ENCODE measurements at regions of chr9 and their contacts with region 1.

Region 1: GRCh38 chr9:21395778-21396717 is 10.8 kb upstream of the IFNA2 start:
- DNase-seq: peak; percentile 26 to 79 (median 65)
- ATAC-seq: peak; percentile 74
- H3K4me3 ChIP-seq: peak overlapping the region; percentile 40 to 52
- H3K4me3 Mint-ChIP-seq: peak overlapping the region; percentile 65
- H3K27ac ChIP-seq: no peak overlapping the region
- H3K27ac Mint-ChIP-seq: no peak overlapping the region
- H3K4me1 ChIP-seq: peaks cover 4% of the 10 kb centered on the region
- H3K4me1 Mint-ChIP-seq: peaks cover 5% of the 10 kb centered on the region
- H3K27me3 ChIP-seq: peaks cover 5 to 7% of the 10 kb centered on the region in 2 experiments
- H3K27me3 Mint-ChIP-seq: peaks cover 55% of the 10 kb centered on the region
- CTCF ChIP-seq: peak; percentile 81

Region 2: DNA sequence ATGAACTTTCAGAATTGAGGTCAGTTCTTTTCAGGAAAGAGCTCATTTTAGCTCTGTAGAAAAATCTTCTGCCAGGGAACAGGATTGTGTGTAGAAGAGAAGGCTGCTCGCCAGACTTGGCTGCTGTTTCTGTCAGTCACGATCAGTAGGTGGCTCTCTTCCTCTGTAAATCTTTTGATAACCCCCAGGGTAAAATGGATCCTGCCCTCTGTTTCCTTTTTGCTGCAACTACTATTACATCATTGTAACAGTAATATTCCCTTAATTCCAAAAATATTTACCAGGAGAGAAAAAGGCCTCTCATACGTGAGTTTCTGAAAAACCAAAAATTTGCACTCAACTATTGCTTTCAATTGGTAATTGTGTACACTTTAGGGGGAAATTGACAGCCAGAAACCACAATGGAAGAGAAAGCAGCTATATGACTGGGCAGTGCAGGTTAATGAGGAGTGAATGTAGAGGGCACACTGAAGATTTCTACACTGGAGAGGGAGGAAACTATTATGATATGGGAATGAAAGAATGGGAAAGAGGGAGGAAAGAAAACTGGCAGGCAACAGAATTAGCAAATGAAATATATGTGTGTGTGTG is 241.9 kb before region 1 on chr9:
- CTCF ChIA-PET with region 1: interaction called, 7 read pairs
- POLR2A ChIA-PET with region 1: no interaction called
- intact Hi-C with region 1: loop called in 1 of 2 experiments (anchors 1 kb)
- DNase-seq: peak in 2 of 9 experiments; percentile 44 to 56
- ATAC-seq: peak; percentile 52
- H3K4me3 ChIP-seq: no peak overlapping the region
- H3K4me3 Mint-ChIP-seq: no peak overlapping the region
- H3K27ac ChIP-seq: no peak overlapping the region
- H3K27ac Mint-ChIP-seq: no peak overlapping the region
- H3K4me1 ChIP-seq: peaks cover 4% of the 10 kb centered on the region
- H3K4me1 Mint-ChIP-seq: peaks cover 9% of the 10 kb centered on the region
- H3K27me3 ChIP-seq: no peaks in the 10 kb centered on the region
- H3K27me3 Mint-ChIP-seq: peaks cover 2% of the 10 kb centered on the region
- CTCF ChIP-seq: no peak

Region 3: DNA sequence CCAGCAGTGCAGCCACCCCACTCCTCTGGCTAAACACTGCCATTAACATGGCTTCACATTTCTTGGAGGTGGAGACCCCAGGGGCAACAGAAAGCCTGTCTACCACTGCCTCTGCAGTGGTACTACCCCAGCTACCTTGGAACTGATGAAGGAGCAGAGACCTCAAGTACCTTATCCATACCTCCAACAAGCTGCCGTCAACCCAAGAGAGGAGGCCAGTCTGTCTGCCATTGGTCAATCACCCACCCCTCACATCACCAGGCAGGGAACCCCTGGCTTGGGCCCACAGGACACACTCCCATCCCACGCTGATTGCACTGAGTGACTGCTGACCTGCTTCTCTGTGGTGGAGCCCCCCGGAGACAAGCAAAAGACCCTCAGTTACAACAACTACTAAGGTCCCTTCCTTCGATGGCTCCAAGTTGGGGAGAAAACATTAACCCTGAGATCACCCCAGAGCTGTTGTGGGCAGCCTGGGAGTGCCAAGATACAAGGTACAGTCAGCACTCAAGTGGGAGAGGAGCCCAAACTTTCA is 161.8 kb before region 1 on chr9:
- CTCF ChIA-PET with region 1: interaction called, 30 read pairs
- POLR2A ChIA-PET with region 1: no interaction called
- intact Hi-C with region 1: loop called (anchors 1 to 10 kb)
- DNase-seq: no peak
- ATAC-seq: no peak
- H3K4me3 ChIP-seq: no peak overlapping the region
- H3K4me3 Mint-ChIP-seq: no peak overlapping the region
- H3K27ac ChIP-seq: no peak overlapping the region
- H3K27ac Mint-ChIP-seq: no peak overlapping the region
- H3K4me1 ChIP-seq: no peaks in the 10 kb centered on the region
- H3K4me1 Mint-ChIP-seq: peaks cover 9% of the 10 kb centered on the region
- H3K27me3 ChIP-seq: no peaks in the 10 kb centered on the region
- H3K27me3 Mint-ChIP-seq: peaks cover 8% of the 10 kb centered on the region
- CTCF ChIP-seq: no peak

Region 4: DNA sequence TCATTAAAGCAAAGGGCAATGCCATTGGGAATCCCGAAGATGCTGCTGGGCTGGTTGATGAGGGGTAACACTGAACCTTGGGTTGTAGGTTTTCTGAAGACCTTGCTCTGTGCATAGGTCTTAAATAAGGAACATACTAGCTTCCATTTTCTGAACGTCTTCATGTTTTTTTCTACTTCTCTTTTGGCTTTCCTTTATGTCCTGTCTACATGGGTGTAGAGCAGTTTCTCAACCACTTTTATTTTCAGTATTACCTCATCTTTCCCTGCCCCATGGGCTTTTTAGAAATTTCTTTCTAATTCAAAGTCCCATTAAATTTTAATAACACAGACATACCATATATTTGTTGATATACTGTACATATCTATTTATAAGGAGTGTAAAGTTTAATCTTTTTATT is 156.1 kb before region 1 on chr9 and contains the start of gene IFNA14:
- CTCF ChIA-PET with region 1: interaction called, 30 read pairs
- POLR2A ChIA-PET with region 1: no interaction called
- intact Hi-C with region 1: loop called (anchors 1 to 10 kb)
- DNase-seq: no peak
- ATAC-seq: no peak
- H3K4me3 ChIP-seq: no peak within 1 kb of the TSS
- H3K4me3 Mint-ChIP-seq: no peak within 1 kb of the TSS
- H3K27ac ChIP-seq: no peak within 1 kb of the TSS
- H3K27ac Mint-ChIP-seq: no peak within 1 kb of the TSS
- H3K4me1 ChIP-seq: no peaks in the 10 kb centered on the region
- H3K4me1 Mint-ChIP-seq: peaks cover 9% of the 10 kb centered on the region
- H3K27me3 ChIP-seq: no peaks in the 10 kb centered on the region
- H3K27me3 Mint-ChIP-seq: peaks cover 16% of the 10 kb centered on the region
- CTCF ChIP-seq: no peak
- total RNA-seq, gene IFNA14: not detected

Region 5: DNA sequence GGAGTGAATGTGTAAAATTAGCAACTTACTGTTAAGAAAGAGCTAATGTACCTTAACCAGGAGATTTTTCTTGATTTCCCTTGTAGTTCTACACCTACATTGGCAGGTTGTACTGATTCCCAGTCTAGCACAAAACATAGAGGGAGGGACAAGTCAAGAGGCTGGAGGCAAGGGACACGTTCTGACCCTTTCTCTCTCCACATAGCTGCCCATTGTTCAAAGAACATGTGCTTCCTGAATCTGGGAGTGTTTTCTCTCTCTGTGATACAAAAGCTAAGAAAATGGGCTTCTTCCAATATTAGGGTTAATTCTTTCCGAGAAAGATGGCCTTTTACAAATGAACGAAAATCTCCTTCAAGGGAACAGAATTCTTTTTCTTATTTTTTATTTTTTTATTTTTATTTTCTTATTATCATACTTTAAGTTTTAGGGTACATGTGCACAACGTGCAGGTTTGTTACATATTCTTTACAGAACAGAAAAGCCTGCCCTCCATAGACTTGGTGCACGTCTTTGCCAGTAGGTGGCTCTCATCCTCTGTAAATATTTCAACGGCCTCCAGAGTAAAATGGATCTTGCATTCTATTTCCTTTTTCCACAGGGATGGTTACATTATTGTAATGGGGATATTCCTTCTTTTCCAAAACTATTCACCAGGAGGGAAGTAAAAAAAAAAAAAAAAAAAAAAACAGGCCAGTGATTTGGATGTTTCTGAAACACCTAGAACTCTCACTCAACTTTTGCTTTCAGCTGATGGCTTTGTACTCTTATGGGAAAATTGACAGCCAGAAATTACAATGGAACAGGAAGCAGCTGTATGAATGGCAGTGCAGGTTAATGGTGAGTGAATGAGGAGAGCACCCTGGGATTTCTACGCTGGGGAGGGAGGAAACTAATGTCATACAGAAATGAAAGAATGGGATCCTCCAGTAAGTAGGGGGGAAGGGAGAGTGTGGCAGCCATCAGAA is 77.8 kb before region 1 on chr9:
- CTCF ChIA-PET with region 1: interaction called, 52 read pairs
- POLR2A ChIA-PET with region 1: no interaction called
- intact Hi-C with region 1: loop called in 1 of 2 experiments (anchors 1 kb)
- DNase-seq: peak in 3 of 9 experiments; percentile 29 to 63 (median 55)
- ATAC-seq: peak; percentile 86
- H3K4me3 ChIP-seq: no peak overlapping the region
- H3K4me3 Mint-ChIP-seq: no peak overlapping the region
- H3K27ac ChIP-seq: no peak overlapping the region
- H3K27ac Mint-ChIP-seq: no peak overlapping the region
- H3K4me1 ChIP-seq: no peaks in the 10 kb centered on the region
- H3K4me1 Mint-ChIP-seq: peaks cover 4% of the 10 kb centered on the region
- H3K27me3 ChIP-seq: no peaks in the 10 kb centered on the region
- H3K27me3 Mint-ChIP-seq: no peaks in the 10 kb centered on the region
- CTCF ChIP-seq: peak; percentile 94

Region 6: DNA sequence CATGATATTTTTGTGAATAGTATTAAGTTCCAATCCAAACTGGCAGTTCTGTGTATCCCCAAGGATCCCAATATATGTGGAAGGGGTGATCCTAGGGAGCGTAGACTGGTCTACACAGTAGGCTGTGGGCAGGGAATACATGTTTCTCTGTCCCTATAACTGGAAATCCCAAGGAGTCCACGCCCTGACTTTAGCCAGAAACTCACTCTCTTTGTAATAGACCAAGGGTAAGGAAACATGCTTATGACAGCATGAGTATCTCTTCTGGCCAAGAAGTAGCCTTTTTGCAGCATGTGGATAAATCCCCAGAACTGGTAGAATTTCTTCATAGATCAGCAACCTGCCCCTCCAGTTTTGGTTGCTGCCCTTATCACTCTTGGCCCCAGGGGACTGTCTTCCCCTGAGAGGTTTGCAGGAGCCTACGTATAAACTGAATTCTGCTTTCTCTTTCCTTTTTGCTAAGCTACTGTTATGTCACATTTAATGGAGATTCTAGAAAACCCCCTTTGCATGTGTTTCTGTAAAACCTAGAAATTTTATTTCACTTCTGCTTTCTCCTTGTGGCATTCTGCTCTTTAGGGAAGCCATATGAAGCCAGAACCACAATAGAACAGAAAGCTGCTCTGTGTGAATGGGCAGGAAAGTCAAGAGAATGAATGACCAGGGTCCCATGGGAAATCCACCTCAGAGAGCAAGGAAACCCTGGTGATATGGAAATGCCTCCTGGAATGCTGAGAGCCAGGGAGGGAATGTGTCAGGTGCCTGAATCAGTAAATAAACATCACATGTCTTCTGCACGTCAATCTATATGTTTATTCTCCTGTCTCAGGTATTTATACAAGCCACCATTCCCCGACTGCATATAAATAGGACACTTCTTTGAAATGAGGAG is 14.4 kb before region 1 on chr9:
- CTCF ChIA-PET with region 1: interaction called, 20 read pairs
- POLR2A ChIA-PET with region 1: interaction called, 3 read pairs
- intact Hi-C with region 1: no loop called
- DNase-seq: peak in 2 of 9 experiments; percentile 36 to 60
- ATAC-seq: peak; percentile 76
- H3K4me3 ChIP-seq: no peak overlapping the region
- H3K4me3 Mint-ChIP-seq: peak overlapping the region; percentile 27
- H3K27ac ChIP-seq: no peak overlapping the region
- H3K27ac Mint-ChIP-seq: no peak overlapping the region
- H3K4me1 ChIP-seq: no peaks in the 10 kb centered on the region
- H3K4me1 Mint-ChIP-seq: peaks cover 7% of the 10 kb centered on the region
- H3K27me3 ChIP-seq: no peaks in the 10 kb centered on the region
- H3K27me3 Mint-ChIP-seq: peaks cover 39% of the 10 kb centered on the region
- CTCF ChIP-seq: no peak

Region 7: GRCh38 chr9:21455320-21455719 is 59.3 kb after region 1 on chr9:
- CTCF ChIA-PET with region 1: no interaction called
- POLR2A ChIA-PET with region 1: no interaction called
- intact Hi-C with region 1: no loop called
- DNase-seq: peak in 4 of 9 experiments; percentile 13 to 62 (median 42)
- ATAC-seq: peak; percentile 94
- H3K4me3 ChIP-seq: no peak overlapping the region
- H3K4me3 Mint-ChIP-seq: no peak overlapping the region
- H3K27ac ChIP-seq: no peak overlapping the region
- H3K27ac Mint-ChIP-seq: no peak overlapping the region
- H3K4me1 ChIP-seq: no peaks in the 10 kb centered on the region
- H3K4me1 Mint-ChIP-seq: no peaks in the 10 kb centered on the region
- H3K27me3 ChIP-seq: no peaks in the 10 kb centered on the region
- H3K27me3 Mint-ChIP-seq: peaks cover 11% of the 10 kb centered on the region
- CTCF ChIP-seq: peak; percentile 52

Measured in CD8-positive, alpha-beta T cell (primary cell).